ENCODE measurements at regions of chr6 and their contacts with region 1.

Region 1: DNA sequence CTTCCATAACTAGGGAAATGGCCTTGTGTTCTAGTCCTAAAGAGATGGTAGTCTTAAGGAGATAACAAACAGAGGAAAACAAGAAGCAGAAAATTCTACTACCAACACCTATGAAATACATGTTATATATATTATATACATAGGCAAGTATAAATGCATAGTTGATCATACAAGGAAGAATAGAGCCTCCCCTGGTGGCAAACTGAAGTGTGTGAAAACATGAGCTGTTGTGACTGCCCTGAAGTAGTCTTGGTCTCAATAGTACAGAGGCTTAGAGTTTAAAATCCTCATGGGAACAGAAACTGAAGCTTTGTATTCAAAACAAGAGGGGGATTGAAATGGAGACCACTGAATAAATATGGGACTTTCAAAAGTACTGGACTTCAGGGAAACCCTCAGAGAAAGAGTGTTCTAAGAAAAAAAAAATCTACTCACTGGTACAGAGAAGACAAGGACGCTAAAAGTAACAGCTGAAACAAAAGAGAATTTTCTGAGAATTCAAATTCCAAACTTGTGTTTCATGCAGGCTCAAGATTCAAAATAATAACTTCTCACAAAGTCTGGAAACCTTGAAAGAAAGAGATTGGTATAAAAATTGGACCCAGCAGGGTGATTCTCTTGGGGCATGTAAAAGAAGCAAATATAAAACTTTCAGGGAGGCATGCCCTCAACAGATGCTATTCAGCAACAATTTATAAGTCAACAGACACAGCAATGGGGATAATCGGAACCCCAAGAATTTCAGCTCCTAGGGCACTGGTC is 59.7 kb upstream of the SAMD3 start:
- DNase-seq: peak; percentile 19
- H3K4me3 ChIP-seq: no peak overlapping the region
- H3K27ac ChIP-seq: no peak overlapping the region
- H3K4me1 ChIP-seq: no peaks in the 10 kb centered on the region
- H3K27me3 ChIP-seq: peaks cover 2 to 5% of the 10 kb centered on the region in 2 experiments
- CTCF ChIP-seq: peak in 1 of 2 donors; percentile 21
- POLR2A ChIP-seq: no peak

Region 2: DNA sequence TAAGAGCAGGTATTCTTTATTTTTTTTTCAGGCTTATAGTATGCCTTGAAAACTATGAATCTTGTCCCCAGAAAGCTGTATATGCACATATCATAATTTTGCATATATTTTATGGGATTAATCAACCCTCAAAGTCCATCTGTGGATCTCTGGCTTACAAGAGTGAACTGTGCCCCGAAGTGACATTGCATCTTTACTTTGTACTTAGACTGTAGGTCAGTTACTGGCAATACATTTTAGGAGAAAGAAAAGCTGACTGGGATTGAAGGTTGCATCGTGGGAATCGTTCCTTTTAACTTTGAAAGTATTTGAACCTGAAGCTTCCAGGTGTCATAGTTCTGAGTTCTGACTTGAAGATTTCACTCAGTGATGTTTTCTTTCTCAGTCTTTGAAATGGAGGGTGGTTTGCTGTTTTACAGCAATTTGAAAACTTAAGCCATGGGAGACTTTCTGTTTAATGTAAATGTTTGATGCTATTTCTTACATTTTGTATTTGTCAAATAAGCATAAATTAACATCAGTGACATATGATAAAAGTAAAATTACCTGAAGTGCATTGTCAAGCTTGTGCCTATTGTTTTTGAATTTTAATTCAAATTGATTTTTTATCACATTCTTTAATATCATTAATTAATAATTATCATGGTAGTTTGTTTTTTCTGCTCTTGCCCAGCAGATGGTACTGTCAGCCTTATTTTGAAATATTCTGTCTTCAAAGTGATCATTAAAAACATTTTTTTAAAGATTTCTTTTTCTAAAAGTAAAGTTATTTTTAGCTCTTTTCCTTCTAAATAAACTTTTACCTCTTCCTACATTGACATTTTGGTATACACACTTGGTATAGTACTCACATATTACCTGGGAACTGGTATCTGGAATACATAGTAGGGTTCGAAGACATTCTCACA is 235.1 kb before region 1 on chr6:
- CTCF ChIA-PET with region 1: interaction called, 10 read pairs
- POLR2A ChIA-PET with region 1: no interaction called
- dilution Hi-C with region 1: no loop called
- intact Hi-C with region 1: no loop called
- DNase-seq: no peak
- H3K4me3 ChIP-seq: no peak overlapping the region
- H3K27ac ChIP-seq: no peak overlapping the region
- H3K4me1 ChIP-seq: peaks cover 3% of the 10 kb centered on the region
- H3K27me3 ChIP-seq: no peaks in the 10 kb centered on the region
- CTCF ChIP-seq: no peak
- POLR2A ChIP-seq: no peak

Region 3: DNA sequence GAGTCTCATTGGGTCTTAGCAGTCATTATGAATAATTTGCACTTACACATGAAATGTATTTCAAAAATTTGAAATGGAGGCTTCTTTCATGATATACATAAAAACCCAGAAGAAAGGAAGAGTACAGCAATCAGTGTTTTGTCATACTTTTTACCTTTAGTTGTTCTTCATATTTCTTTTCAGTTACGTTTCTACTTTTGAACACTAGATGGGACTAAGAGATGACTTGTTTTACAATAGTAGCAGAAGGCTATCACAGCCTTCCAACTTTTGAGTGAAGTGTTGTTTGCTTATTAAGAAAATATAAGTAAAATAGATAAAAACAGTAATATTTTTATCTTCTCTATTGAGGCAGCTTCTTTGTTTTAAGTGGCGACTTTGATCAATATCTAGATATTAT is 205.9 kb before region 1 on chr6:
- CTCF ChIA-PET with region 1: interaction called, 13 read pairs
- POLR2A ChIA-PET with region 1: no interaction called
- dilution Hi-C with region 1: no loop called
- intact Hi-C with region 1: loop called (anchors 10 kb)
- DNase-seq: no peak
- H3K4me3 ChIP-seq: no peak overlapping the region
- H3K27ac ChIP-seq: no peak overlapping the region
- H3K4me1 ChIP-seq: peaks cover 9% of the 10 kb centered on the region
- H3K27me3 ChIP-seq: no peaks in the 10 kb centered on the region
- CTCF ChIP-seq: no peak
- POLR2A ChIP-seq: no peak